Activated CD4-positive, alpha-beta T cell treated with anti-CD3 and anti-CD28 coated beads for 36 hours (primary cell): ENCODE measurements at regions of chr15 and their contacts with region 1.

Region 1: GRCh38 chr15:25401501-25401900 is 37.3 kb downstream of the UBE3A start:
- DNase-seq: no peak
- ATAC-seq: peak; percentile 23
- H3K4me3 Mint-ChIP-seq: no peak overlapping the region
- H3K27ac Mint-ChIP-seq: no peak overlapping the region
- H3K4me1 Mint-ChIP-seq: peaks cover 39% of the 10 kb centered on the region
- H3K27me3 Mint-ChIP-seq: no peaks in the 10 kb centered on the region

Region 2: GRCh38 chr15:25378501-25378901 is 23.0 kb before region 1 on chr15:
- CTCF ChIA-PET with region 1: interaction called, 3 read pairs
- POLR2A ChIA-PET with region 1: no interaction called
- intact Hi-C with region 1: loop called in 1 of 2 experiments (anchors 2 kb)
- DNase-seq: no peak
- ATAC-seq: peak; percentile 83
- H3K4me3 Mint-ChIP-seq: no peak overlapping the region
- H3K27ac Mint-ChIP-seq: no peak overlapping the region
- H3K4me1 Mint-ChIP-seq: peaks cover 38% of the 10 kb centered on the region
- H3K27me3 Mint-ChIP-seq: no peaks in the 10 kb centered on the region